OCI-LY7 (cell line): ENCODE measurements at regions of chr7 and their contacts with region 1.

Region 1: GRCh38 chr7:25851332-25852210 is 300.4 kb upstream of the NFE2L3 start:
- DNase-seq: peak; percentile 81
- H3K4me3 ChIP-seq: no peak overlapping the region
- H3K27ac ChIP-seq: no peak overlapping the region
- H3K4me1 ChIP-seq: peaks cover 16% of the 10 kb centered on the region
- CTCF ChIP-seq: peak; percentile 99

Region 2: GRCh38 chr7:25259587-25260243 is 591.9 kb before region 1 on chr7:
- CTCF ChIA-PET with region 1: no interaction called
- POLR2A ChIA-PET with region 1: no interaction called
- intact Hi-C with region 1: loop called (anchors 1 kb)
- DNase-seq: peak; percentile 83
- H3K4me3 ChIP-seq: no peak overlapping the region
- H3K27ac ChIP-seq: no peak overlapping the region
- H3K4me1 ChIP-seq: peaks cover 16% of the 10 kb centered on the region
- CTCF ChIP-seq: peak; percentile 87

Region 3: GRCh38 chr7:25389489-25390106 is 462.0 kb before region 1 on chr7:
- CTCF ChIA-PET with region 1: no interaction called
- POLR2A ChIA-PET with region 1: no interaction called
- intact Hi-C with region 1: loop called (anchors 2 kb)
- DNase-seq: peak; percentile 50
- H3K4me3 ChIP-seq: no peak overlapping the region
- H3K27ac ChIP-seq: no peak overlapping the region
- H3K4me1 ChIP-seq: no peaks in the 10 kb centered on the region
- CTCF ChIP-seq: peak; percentile 82

Region 4: GRCh38 chr7:25565949-25566348 is 285.6 kb before region 1 on chr7:
- CTCF ChIA-PET with region 1: no interaction called
- POLR2A ChIA-PET with region 1: interaction called, 3 read pairs
- intact Hi-C with region 1: loop called (anchors 2 kb)
- DNase-seq: peak; percentile 69
- H3K4me3 ChIP-seq: no peak overlapping the region
- H3K27ac ChIP-seq: no peak overlapping the region
- H3K4me1 ChIP-seq: peaks cover 7% of the 10 kb centered on the region
- CTCF ChIP-seq: peak; percentile 100

Region 5: GRCh38 chr7:25694699-25695098 is 156.9 kb before region 1 on chr7:
- CTCF ChIA-PET with region 1: no interaction called
- POLR2A ChIA-PET with region 1: no interaction called
- intact Hi-C with region 1: no loop called
- DNase-seq: no peak
- H3K4me3 ChIP-seq: no peak overlapping the region
- H3K27ac ChIP-seq: no peak overlapping the region
- H3K4me1 ChIP-seq: peaks cover 22% of the 10 kb centered on the region
- CTCF ChIP-seq: no peak

Region 6: DNA sequence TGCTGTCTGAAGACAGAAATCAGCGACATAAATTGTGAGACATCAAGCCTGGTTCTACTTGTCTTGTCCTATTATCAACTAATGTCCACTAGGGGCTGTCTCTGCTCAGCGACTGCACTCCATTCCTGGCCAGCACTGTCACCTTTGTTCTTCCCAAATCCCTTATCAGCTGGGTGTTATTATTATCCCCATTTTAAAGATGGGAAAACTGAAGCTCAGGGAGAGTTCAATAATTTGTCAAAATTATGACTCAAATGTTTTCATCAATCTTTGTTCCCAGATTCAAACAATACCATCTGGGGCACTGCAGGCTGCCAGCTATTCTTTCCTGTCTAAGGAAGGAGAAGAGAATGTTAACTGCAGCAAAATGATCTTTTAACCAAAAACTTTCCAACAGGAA is 131.1 kb before region 1 on chr7:
- CTCF ChIA-PET with region 1: no interaction called
- POLR2A ChIA-PET with region 1: no interaction called
- intact Hi-C with region 1: loop called (anchors 2 kb)
- DNase-seq: peak; percentile 14
- H3K4me3 ChIP-seq: no peak overlapping the region
- H3K27ac ChIP-seq: no peak overlapping the region
- H3K4me1 ChIP-seq: no peaks in the 10 kb centered on the region
- CTCF ChIP-seq: peak; percentile 72

Region 7: GRCh38 chr7:25731068-25731845 is 120.3 kb before region 1 on chr7:
- CTCF ChIA-PET with region 1: no interaction called
- POLR2A ChIA-PET with region 1: no interaction called
- intact Hi-C with region 1: no loop called
- DNase-seq: no peak
- H3K4me3 ChIP-seq: no peak overlapping the region
- H3K27ac ChIP-seq: no peak overlapping the region
- H3K4me1 ChIP-seq: no peaks in the 10 kb centered on the region
- CTCF ChIP-seq: no peak